ENCODE measurements at regions of chr5 and their contacts with region 1.

Region 1: DNA sequence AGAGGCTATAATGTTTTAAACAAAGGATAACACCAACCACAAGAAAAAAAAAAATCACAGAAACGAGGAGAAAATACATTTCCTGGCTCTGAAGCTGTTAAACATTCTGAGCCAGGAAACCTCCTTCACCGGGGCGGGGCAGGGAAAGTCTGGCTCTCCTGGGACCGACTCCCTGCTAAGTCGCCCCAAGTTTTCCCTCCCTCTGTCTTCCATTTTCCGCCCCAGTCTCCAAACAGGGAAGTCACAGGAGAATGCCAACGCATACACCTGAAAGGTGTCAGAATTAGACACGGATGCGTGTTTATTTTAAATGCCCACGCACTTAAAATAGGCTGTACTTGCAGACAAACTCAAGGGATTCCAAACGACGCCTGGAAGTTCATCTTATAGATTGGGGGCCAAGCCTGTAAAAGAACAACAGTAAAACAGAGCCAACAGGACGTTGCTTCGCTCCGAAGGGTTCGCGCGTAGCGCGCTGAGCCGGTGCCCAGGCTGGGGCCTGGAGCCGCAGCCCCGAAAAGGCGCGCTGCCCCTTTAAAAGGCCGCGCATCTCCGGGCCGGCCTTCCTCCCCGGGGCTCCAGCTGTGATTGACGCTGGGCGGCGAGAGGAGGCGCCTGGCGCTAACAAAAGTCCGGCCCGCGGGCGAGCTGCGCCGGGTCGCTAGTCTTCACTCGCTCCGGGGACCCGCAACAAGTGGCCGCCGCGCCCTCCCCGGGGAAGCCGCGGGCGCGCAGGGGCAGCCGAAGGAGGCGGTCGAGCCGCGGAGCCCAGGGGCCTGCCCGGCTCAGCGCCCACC is at the start of gene FBXL7:
- DNase-seq: peak; percentile 81
- H3K4me3 ChIP-seq: peak within 1 kb of the TSS; percentile 83 to 98 (median 88)
- H3K27ac ChIP-seq: peak within 1 kb of the TSS; percentile 66
- H3K4me1 ChIP-seq: peaks cover 34% of the 10 kb centered on the region
- H3K27me3 ChIP-seq: no peaks in the 10 kb centered on the region
- CTCF ChIP-seq: peak in 1 of 2 donors; percentile 24
- POLR2A ChIP-seq: peak; percentile 88
- total RNA-seq, gene FBXL7: 28.6 and 32.2 TPM in 2 replicates

Region 2: DNA sequence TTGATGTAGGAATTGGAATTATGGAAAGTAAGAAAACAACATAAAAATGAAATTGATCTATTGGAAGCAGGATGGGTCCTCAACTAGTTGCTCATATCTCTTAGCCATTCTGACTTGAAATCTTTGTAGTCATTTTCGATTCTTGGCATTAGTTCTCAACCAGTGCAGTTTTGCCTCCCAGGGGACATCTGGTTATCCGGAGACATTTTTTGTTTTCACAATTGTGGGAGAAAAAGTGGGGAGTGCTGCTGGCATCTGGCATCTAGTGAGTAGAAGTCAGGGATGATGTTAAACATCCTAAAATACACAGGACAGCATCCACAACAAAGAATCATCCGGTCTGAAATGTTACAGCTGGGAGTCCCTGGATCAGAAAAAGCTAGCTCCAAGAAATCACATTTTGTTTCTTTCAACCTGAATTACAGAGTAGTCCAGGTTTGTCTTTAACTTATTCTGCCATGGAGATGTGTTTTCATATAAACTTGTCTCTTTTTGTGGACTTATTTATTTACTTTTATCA is 75.1 kb after region 1 on chr5:
- CTCF ChIA-PET with region 1: interaction called, 3 read pairs
- POLR2A ChIA-PET with region 1: no interaction called
- dilution Hi-C with region 1: no loop called
- intact Hi-C with region 1: loop called (anchors 2 kb)
- DNase-seq: no peak
- H3K4me3 ChIP-seq: no peak overlapping the region
- H3K27ac ChIP-seq: no peak overlapping the region
- H3K4me1 ChIP-seq: peaks cover 27% of the 10 kb centered on the region
- H3K27me3 ChIP-seq: no peaks in the 10 kb centered on the region
- CTCF ChIP-seq: no peak
- POLR2A ChIP-seq: no peak

Region 3: GRCh38 chr5:15683332-15683731 is 183.6 kb after region 1 on chr5:
- CTCF ChIA-PET with region 1: interaction called, 5 read pairs
- POLR2A ChIA-PET with region 1: no interaction called
- dilution Hi-C with region 1: no loop called
- intact Hi-C with region 1: loop called (anchors 10 kb)
- DNase-seq: peak; percentile 76
- H3K4me3 ChIP-seq: no peak overlapping the region
- H3K27ac ChIP-seq: no peak overlapping the region
- H3K4me1 ChIP-seq: peaks cover 4% of the 10 kb centered on the region
- H3K27me3 ChIP-seq: no peaks in the 10 kb centered on the region
- CTCF ChIP-seq: peak; percentile 44 to 58
- POLR2A ChIP-seq: no peak

Region 4: DNA sequence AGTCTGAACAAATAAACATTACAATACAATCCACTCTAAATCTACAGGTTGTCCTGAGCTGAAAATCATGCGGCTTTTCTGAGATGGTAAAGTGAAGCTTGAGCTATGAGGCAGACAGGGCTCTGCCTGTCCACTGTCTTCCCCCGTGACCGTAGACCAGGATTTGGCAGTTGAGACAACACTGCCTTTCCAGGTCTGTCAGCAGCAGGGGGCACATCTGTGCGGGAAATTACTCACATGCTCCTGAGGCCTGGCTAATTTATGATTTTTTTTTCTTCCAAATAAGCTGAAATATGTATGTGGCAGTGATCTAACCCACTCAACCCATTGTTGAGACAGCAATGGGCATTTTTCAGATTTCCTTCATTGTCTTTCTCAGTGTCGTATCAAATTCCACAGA is 308.1 kb after region 1 on chr5:
- CTCF ChIA-PET with region 1: interaction called, 5 read pairs
- POLR2A ChIA-PET with region 1: no interaction called
- dilution Hi-C with region 1: no loop called
- intact Hi-C with region 1: loop called (anchors 5 kb)
- DNase-seq: peak; percentile 90
- H3K4me3 ChIP-seq: no peak overlapping the region
- H3K27ac ChIP-seq: peak overlapping the region; percentile 35
- H3K4me1 ChIP-seq: peaks cover 15% of the 10 kb centered on the region
- H3K27me3 ChIP-seq: no peaks in the 10 kb centered on the region
- CTCF ChIP-seq: peak; percentile 33 to 47
- POLR2A ChIP-seq: no peak

Region 5: DNA sequence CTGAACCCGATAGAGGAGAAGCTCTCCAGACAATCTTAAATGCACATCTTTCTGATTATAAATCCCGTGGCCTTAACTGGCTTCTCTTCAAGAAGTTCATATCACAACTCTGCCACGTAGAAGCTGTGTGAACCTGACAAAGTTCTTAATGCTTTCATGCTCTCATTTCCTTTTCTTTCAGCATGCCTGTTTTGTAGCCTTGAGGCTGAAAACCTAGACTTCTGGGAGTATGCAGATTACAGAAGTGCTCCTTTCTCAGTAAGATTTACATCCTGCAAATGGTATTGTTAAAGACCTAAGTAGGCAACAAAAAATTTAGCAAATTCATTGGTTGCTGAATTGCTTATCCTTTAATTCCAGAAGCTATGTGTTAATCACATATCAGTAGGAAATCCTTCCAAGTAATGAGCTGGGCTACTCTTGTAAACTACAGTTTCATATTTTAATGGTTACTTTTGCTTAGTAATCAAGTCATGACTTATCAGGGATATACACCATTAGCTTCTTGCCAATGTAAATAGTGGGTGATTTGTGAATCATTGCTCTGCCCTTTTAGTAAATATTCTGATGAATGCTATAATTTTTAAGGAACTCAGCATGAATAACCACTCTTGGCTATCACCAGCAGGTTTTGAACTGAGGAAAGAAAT is 335.0 kb after region 1 on chr5:
- CTCF ChIA-PET with region 1: no interaction called
- POLR2A ChIA-PET with region 1: no interaction called
- dilution Hi-C with region 1: no loop called
- intact Hi-C with region 1: loop called (anchors 5 kb)
- DNase-seq: peak; percentile 94
- H3K4me3 ChIP-seq: peak overlapping the region in 1 of 3 experiments; percentile 27
- H3K27ac ChIP-seq: peak overlapping the region; percentile 79
- H3K4me1 ChIP-seq: peaks cover 24% of the 10 kb centered on the region
- H3K27me3 ChIP-seq: no peaks in the 10 kb centered on the region
- CTCF ChIP-seq: no peak
- POLR2A ChIP-seq: no peak